PC-3 (cell line): ENCODE measurements at regions of chr11 and their contacts with region 1.

Region 1: DNA sequence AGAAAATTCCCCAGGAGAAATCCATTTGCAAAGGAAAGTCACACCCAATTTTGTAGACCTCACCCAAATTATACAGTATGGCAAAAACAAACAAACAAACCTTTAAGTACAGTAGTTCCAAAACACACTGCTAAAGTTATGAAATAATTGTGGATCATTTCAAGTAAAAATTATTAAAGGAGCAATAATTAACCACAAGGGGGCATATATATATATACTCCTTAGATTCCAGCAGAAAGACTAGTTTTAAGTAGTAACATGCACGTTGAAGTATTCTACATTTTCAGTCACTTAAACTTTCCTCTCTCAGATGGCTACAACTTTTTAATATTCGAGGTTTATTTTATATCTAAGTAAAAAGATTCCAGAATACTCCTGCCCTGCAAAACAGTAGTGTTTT is 26.8 kb downstream of the RNF141 start:
- DNase-seq: peak; percentile 56
- ATAC-seq: no peak
- H3K4me3 ChIP-seq: no peak overlapping the region
- H3K27ac ChIP-seq: no peak overlapping the region
- H3K4me1 ChIP-seq: no peaks in the 10 kb centered on the region
- H3K27me3 ChIP-seq: no peaks in the 10 kb centered on the region
- CTCF ChIP-seq: peak; percentile 65

Region 2: GRCh38 chr11:10351768-10352641 is 162.2 kb before region 1 on chr11:
- CTCF ChIA-PET with region 1: no interaction called
- POLR2A ChIA-PET with region 1: no interaction called
- intact Hi-C with region 1: no loop called
- DNase-seq: peak; percentile 72
- ATAC-seq: peak; percentile 68
- H3K4me3 ChIP-seq: no peak overlapping the region
- H3K27ac ChIP-seq: peak overlapping the region; percentile 58
- H3K4me1 ChIP-seq: peaks cover 40% of the 10 kb centered on the region
- H3K27me3 ChIP-seq: no peaks in the 10 kb centered on the region
- CTCF ChIP-seq: no peak

Region 3: DNA sequence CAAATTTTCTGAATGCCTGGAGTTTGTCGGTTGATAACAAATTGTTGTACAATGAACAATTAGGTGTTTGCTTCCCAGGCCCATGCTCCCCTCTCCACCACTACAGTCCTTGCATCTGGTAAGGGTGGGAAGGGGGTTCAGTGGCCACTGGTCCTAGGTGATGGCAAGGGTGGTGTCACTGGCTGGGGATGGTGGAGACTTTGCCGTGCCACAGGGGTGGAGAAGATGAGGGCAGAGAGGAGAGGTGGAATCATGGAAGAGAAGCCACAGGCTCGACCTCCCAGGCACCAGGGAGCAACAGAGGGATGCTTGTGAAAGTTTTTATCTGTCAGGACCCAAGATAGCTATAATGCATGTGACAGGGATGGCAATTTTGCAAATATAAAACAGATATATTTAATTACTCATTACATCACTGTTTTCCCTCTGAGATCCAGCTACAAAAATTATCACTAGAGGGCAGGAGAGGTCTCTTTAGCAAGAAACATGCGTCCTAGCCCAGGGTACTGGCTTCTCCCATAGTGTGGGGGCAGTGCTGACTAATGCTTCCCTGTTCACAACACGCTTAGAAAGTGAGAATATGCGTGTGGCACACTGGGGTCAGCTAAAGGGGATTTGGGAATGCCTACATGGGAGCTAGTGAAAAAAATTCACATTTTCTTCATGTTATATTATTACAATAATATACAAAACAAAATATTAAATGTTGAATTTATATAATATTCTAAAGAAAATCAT is 108.2 kb before region 1 on chr11:
- CTCF ChIA-PET with region 1: no interaction called
- POLR2A ChIA-PET with region 1: no interaction called
- intact Hi-C with region 1: loop called (anchors 2 kb)
- DNase-seq: peak; percentile 87
- ATAC-seq: peak; percentile 41
- H3K4me3 ChIP-seq: no peak overlapping the region
- H3K27ac ChIP-seq: no peak overlapping the region
- H3K4me1 ChIP-seq: peaks cover 21% of the 10 kb centered on the region
- H3K27me3 ChIP-seq: no peaks in the 10 kb centered on the region
- CTCF ChIP-seq: peak; percentile 70

Region 4: DNA sequence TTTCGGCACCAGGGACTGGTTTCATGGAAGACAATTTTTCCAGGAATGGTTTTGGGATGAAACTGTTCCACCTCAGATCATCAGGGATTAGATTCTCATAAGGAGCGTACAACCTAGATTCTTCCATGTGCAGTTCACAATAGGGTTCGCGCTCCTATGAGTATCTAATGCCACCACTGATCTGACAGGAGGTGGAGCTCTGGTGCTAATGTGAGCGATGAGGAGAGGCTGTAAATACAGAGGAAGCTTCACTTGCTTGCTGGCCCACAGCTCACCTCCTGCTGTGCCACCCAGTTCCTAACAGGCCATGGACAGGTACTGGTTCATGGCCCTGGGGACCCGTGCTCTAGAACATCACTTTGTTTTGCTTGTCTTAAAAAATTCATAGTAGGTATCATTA is 100.9 kb before region 1 on chr11:
- CTCF ChIA-PET with region 1: interaction called, 6 read pairs
- POLR2A ChIA-PET with region 1: no interaction called
- intact Hi-C with region 1: loop called (anchors 1 kb)
- DNase-seq: peak; percentile 62
- ATAC-seq: peak; percentile 96
- H3K4me3 ChIP-seq: no peak overlapping the region
- H3K27ac ChIP-seq: no peak overlapping the region
- H3K4me1 ChIP-seq: 0 out of 2 replicates have a peak, but pooled peaks cover 4% of the 10 kb centered on the region
- H3K27me3 ChIP-seq: no peaks in the 10 kb centered on the region
- CTCF ChIP-seq: peak; percentile 57

Region 5: GRCh38 chr11:10502770-10503169 is 11.4 kb before region 1 on chr11:
- CTCF ChIA-PET with region 1: no interaction called
- POLR2A ChIA-PET with region 1: no interaction called
- intact Hi-C with region 1: no loop called
- DNase-seq: no peak
- ATAC-seq: no peak
- H3K4me3 ChIP-seq: no peak overlapping the region
- H3K27ac ChIP-seq: no peak overlapping the region
- H3K4me1 ChIP-seq: no peaks in the 10 kb centered on the region
- H3K27me3 ChIP-seq: no peaks in the 10 kb centered on the region
- CTCF ChIP-seq: no peak

Region 6: GRCh38 chr11:10526974-10527918 is 13.0 kb after region 1 on chr11:
- CTCF ChIA-PET with region 1: no interaction called
- POLR2A ChIA-PET with region 1: no interaction called
- intact Hi-C with region 1: no loop called
- DNase-seq: peak; percentile 81
- ATAC-seq: peak; percentile 96
- H3K4me3 ChIP-seq: no peak overlapping the region
- H3K27ac ChIP-seq: peak overlapping the region; percentile 51
- H3K4me1 ChIP-seq: peaks cover 24% of the 10 kb centered on the region
- H3K27me3 ChIP-seq: no peaks in the 10 kb centered on the region
- CTCF ChIP-seq: no peak

Region 7: DNA sequence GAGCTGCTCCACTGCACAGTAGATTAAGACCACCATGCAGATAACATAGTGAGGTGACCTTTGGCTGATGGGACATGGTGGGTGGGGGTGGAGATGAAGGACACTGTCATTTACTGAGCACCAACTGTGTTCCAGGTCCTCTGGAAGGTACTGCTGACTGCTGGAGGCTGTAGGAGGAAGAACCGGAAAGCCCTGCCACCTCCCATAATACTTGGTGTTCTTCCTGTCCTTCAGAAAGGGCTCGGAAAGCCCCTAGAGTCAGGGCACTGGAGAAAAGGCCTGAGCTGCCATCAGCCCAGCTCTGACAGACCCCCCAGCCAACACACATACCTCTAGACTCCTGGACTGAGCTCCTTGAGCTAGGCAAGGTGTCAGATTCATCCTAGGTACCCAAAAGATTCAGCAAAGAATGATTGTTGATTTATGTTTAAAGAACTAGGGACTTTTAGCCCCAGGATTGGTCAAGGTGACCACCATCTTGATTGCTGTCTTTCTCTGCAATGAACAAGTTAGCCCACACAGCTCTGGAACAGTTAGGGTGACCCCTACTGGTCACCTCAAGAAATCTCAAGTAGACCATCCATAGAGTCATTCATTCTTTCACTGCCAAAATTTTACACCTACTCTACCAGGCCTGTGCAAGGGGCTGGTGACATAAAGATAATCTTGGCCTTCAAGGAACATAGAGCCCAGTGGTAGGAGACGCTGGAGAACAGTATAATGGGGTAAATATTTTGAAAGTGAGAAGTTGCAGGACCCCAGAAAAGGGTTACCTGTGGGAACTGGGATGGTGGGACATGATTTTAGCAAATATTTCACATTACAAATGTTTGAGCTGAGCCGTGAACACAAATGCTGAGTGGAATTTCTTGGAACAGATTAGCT is 140.0 kb after region 1 on chr11:
- CTCF ChIA-PET with region 1: no interaction called
- POLR2A ChIA-PET with region 1: no interaction called
- intact Hi-C with region 1: loop called (anchors 1 kb)
- DNase-seq: peak; percentile 62
- ATAC-seq: peak; percentile 80
- H3K4me3 ChIP-seq: no peak overlapping the region
- H3K27ac ChIP-seq: no peak overlapping the region
- H3K4me1 ChIP-seq: peaks cover 31% of the 10 kb centered on the region
- H3K27me3 ChIP-seq: no peaks in the 10 kb centered on the region
- CTCF ChIP-seq: peak; percentile 86

Region 8: GRCh38 chr11:10878408-10879214 is 364.4 kb after region 1 on chr11:
- CTCF ChIA-PET with region 1: no interaction called
- POLR2A ChIA-PET with region 1: no interaction called
- intact Hi-C with region 1: no loop called
- DNase-seq: peak; percentile 79
- ATAC-seq: no peak
- H3K4me3 ChIP-seq: no peak overlapping the region
- H3K27ac ChIP-seq: no peak overlapping the region
- H3K4me1 ChIP-seq: peaks cover 42% of the 10 kb centered on the region
- H3K27me3 ChIP-seq: no peaks in the 10 kb centered on the region
- CTCF ChIP-seq: peak; percentile 83